Astrocyte of the cerebellum (primary cell): ENCODE measurements at regions of chr6 and their contacts with region 1.

Region 1: GRCh38 chr6:593139-593906 is 63.6 kb downstream of the HUS1B start:
- DNase-seq: peak; percentile 46
- H3K4me3 ChIP-seq: no peak overlapping the region
- CTCF ChIP-seq: peak; percentile 57

Region 2: DNA sequence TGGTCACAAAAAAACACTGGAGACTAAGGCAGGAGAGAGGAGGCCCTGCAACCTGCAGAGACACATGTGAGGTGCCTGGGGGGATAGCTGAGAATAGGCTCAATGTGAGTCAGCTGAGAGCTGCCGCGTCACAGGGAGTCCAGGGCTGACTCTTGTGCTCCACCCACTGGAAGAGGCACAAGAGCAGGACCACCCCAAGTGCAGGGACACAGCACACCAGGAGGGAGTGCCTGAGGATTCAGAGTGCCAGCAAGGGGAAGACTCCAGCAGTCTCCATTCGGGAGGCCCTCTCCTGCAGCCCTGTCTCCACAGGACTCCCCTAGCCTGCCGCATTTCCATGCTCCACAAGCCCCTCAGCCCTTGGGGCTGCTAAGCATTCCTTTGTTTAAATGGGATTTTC is 41.9 kb before region 1 on chr6:
- in situ Hi-C with region 1: no loop called
- DNase-seq: no peak
- H3K4me3 ChIP-seq: no peak overlapping the region
- CTCF ChIP-seq: peak; percentile 29

Region 3: DNA sequence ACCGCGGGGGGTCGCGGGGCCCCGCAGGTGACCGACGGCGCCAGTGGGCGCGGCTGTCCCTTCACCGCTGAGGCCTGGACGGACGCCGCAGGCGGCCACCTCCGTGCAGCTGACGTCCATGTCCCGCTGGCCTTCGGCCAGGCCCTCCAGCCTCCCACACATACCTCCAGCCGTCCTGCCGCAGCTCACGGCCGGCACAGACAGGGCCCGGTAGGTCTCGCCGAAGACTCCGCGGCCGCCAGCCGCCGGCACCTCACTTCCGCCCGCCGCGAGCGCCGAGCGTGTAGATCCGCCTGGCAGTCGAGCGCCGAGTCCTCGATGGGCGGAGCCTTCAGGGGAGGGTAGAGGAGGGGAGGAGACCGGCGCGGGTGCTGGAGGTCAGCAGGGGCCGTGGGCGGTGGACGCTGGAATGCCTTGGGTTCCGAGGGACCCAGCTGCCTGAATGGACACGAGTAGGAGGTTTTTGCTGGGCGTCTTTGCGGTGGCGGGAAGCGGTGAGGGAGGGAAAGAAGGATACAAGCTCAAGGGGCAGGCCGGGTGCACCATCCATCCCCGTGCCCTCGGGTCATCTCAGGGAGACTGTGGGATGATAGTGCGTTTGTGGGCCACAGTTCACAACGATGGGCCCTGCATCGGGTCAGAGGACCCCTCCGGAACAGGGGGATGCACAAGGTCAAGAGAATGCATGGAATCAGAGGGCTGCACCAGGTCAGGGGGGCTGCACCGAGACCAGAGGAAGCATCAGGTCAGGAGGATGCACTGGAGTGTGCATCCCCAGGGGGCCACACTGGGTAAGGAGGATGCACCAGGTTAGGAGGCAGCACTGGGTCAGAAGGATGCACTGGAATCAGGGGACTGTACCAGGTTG is 99.8 kb after region 1 on chr6 and contains the start of gene EXOC2:
- in situ Hi-C with region 1: no loop called
- DNase-seq: peak; percentile 55
- H3K4me3 ChIP-seq: peak within 1 kb of the TSS; percentile 83
- CTCF ChIP-seq: no peak

Region 4: DNA sequence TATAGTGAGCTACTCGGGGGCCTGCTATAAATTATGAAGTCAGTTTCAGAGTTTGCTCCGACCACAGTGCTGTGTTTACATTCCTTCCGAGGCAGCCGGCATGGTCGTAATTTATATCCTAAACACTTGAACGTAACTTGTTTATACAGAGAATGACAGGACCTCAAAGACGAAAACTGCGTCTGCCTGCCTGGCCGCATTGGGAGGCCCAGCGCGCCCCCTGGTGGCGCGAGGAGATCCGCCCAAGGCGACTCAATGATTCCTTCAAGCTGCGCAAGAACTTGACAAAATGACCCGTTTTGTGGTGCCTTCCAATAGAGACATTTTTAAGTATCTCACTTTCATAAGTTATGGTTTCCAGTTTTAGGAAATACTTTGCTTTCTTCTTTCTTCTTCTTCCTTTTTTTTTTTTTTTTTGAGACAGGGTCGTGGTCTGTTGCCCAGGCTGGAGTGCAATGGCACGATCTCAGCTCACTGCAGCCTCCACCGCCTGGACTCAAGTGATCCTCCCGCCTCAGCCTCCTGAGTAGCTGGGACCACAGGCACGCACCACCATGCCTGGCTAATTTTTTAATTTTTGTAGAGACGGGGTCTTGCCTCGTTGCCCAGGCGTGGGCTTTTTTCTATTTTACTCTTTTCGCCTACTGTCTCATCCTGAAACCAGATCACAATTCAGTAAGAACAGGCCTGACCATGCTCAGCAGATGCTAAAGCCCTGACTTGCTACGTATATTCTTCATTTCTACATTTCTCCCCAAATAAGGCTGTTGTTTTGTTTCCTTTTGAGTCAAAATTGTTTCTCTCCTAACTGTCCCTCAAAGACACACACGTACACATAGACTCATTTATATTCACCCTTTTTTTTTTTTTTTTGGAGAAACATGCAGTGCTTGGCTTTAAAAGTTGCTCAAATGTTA is 803.9 kb after region 1 on chr6:
- in situ Hi-C with region 1: loop called (anchors 25 kb)
- DNase-seq: peak; percentile 35
- H3K4me3 ChIP-seq: no peak overlapping the region
- CTCF ChIP-seq: peak; percentile 99